Activated CD4-positive, alpha-beta T cell treated with anti-CD3 and anti-CD28 coated beads, Interleukin-2, amount 10 ng/mL, durations not matched to agents 24 days and 14 days (primary cell): ENCODE measurements at regions of chr11 and their contacts with region 1.

Region 1: GRCh38 chr11:12893787-12894672 is 115.1 kb upstream of the RASSF10 start:
- DNase-seq: peak; percentile 89
- H3K4me3 Mint-ChIP-seq: no peak overlapping the region
- H3K27ac Mint-ChIP-seq: no peak overlapping the region
- H3K4me1 Mint-ChIP-seq: no peaks in the 10 kb centered on the region
- H3K27me3 Mint-ChIP-seq: peaks cover 19% of the 10 kb centered on the region

Region 2: DNA sequence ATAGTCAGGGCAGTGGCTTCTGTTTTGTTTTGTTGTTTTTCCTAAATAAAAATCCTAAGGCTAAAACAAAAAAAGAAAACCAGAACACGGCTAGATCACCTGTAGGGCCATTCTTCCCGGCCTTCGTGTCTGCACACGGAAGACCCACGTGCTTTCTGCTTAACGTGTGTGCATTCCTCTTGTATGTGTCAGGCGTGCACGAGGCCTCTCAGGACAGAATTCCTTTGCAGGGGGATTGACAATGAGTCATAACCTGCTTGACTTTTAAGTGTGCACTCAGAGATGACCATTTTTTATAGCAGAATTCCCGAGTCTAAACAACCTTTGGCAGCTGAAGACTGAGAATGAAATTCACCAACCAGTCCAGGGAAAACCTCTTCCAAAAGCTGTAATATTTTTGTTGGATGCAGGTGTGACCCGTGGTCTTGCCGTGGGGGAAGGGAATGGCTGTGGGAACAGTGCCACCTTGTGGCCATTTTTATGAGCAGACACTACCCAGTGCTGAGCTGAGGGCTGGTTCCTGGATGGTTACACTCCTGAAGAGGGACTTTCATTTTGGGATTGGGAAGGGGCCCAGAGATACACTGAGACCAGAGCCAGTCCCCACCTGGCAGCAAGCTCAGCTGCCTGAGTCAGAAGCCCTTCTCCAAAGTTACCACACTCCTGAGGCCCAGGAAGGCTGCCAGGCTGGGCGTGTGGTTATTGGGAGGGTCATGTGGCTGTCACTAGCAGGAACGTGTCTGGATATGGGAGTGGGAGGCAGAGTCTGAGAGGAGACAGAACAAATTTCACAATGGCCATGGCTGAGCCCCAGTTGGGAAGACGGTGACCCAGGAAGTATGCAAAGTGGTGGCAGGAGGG is 849.8 kb before region 1 on chr11:
- intact Hi-C with region 1: loop called (anchors 5 kb)
- DNase-seq: peak; percentile 90
- H3K4me3 Mint-ChIP-seq: no peak overlapping the region
- H3K27ac Mint-ChIP-seq: peak overlapping the region; percentile 2
- H3K4me1 Mint-ChIP-seq: peaks cover 19% of the 10 kb centered on the region
- H3K27me3 Mint-ChIP-seq: peaks cover 16% of the 10 kb centered on the region

Region 3: GRCh38 chr11:12289667-12290476 is 604.2 kb before region 1 on chr11:
- intact Hi-C with region 1: loop called (anchors 5 kb)
- DNase-seq: peak; percentile 53
- H3K4me3 Mint-ChIP-seq: no peak overlapping the region
- H3K27ac Mint-ChIP-seq: peak overlapping the region; percentile 68
- H3K4me1 Mint-ChIP-seq: peaks cover 9% of the 10 kb centered on the region
- H3K27me3 Mint-ChIP-seq: no peaks in the 10 kb centered on the region

Region 4: GRCh38 chr11:12411806-12412727 is 482.0 kb before region 1 on chr11:
- intact Hi-C with region 1: loop called (anchors 5 kb)
- DNase-seq: peak; percentile 70
- H3K4me3 Mint-ChIP-seq: no peak overlapping the region
- H3K27ac Mint-ChIP-seq: no peak overlapping the region
- H3K4me1 Mint-ChIP-seq: no peaks in the 10 kb centered on the region
- H3K27me3 Mint-ChIP-seq: peaks cover 23% of the 10 kb centered on the region

Region 5: GRCh38 chr11:12599408-12600143 is 294.5 kb before region 1 on chr11:
- intact Hi-C with region 1: loop called (anchors 1 kb)
- DNase-seq: peak; percentile 84
- H3K4me3 Mint-ChIP-seq: no peak overlapping the region
- H3K27ac Mint-ChIP-seq: no peak overlapping the region
- H3K4me1 Mint-ChIP-seq: peaks cover 2% of the 10 kb centered on the region
- H3K27me3 Mint-ChIP-seq: peaks cover 15% of the 10 kb centered on the region

Region 6: GRCh38 chr11:12914400-12914912 is 20.4 kb after region 1 on chr11:
- intact Hi-C with region 1: no loop called
- DNase-seq: peak; percentile 60
- H3K4me3 Mint-ChIP-seq: no peak overlapping the region
- H3K27ac Mint-ChIP-seq: no peak overlapping the region
- H3K4me1 Mint-ChIP-seq: no peaks in the 10 kb centered on the region
- H3K27me3 Mint-ChIP-seq: peaks cover 10% of the 10 kb centered on the region